GM12878 (cell line): ENCODE measurements at regions of chr9 and their contacts with region 1.

Region 1: GRCh38 chr9:2053883-2054845 is 39.0 kb downstream of the SMARCA2 start:
- DNase-seq: peak; percentile 95
- ATAC-seq: peak; percentile 95
- H3K4me3 ChIP-seq: peak overlapping the region; percentile 31; the same call in 1 of the 2 replicates
- H3K27ac ChIP-seq: peak overlapping the region; percentile 78
- H3K4me1 ChIP-seq: peaks cover 33% of the 10 kb centered on the region
- H3K27me3 ChIP-seq: no peaks in the 10 kb centered on the region
- CTCF ChIP-seq: no peak
- EP300 ChIP-seq: peak; percentile 87 to 88
- POLR2A ChIP-seq: 0 out of 2 replicates have a peak, but pooled peaks have one; percentile 28
- RAD21 ChIP-seq: 0 out of 2 replicates have a peak, but pooled peaks have one; percentile 6

Region 2: DNA sequence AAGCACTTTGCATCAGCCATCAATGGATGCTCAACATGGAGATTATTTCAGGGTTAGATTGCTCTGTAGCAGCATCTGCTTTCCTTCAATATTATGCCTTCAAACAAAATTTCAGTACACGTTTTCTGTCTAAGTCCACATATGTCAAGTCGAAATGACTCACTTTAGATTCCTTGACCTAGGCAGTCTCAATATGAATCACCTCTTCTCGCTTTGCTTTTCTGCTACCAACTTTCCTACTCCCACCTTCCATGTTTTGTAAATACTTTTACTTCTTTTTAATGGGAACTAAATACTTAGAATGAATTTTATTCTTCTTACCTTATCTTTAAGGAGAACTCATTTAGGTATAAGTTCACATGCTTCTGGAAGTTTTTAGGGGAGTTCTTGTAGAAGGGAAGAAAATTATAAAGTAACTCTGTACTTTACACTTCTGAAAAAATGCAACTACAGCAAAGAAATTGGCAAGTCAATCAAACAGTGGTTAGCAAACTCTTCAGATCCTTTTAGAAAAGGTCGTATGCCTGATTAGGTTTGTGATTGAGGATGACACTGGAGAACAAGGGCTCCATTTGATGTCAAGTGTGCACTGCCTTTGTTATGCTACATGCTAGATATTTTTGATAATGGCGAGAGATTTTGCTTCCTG is 517.5 kb before region 1 on chr9:
- CTCF ChIA-PET with region 1: no interaction called
- POLR2A ChIA-PET with region 1: no interaction called
- RAD21 ChIA-PET with region 1: no interaction called
- SMC1A ChIA-PET with region 1: no interaction called
- in situ Hi-C with region 1: no loop called
- intact Hi-C with region 1: no loop called
- DNase-seq: peak; percentile 38
- ATAC-seq: peak; percentile 86
- H3K4me3 ChIP-seq: no peak overlapping the region
- H3K27ac ChIP-seq: no peak overlapping the region
- H3K4me1 ChIP-seq: peaks cover 6% of the 10 kb centered on the region; the same call in 1 of the 2 replicates
- H3K27me3 ChIP-seq: no peaks in the 10 kb centered on the region
- CTCF ChIP-seq: no peak
- EP300 ChIP-seq: peak; percentile 64 to 85; a peak in 3 of 4 replicates
- POLR2A ChIP-seq: no peak
- RAD21 ChIP-seq: no peak

Region 3: DNA sequence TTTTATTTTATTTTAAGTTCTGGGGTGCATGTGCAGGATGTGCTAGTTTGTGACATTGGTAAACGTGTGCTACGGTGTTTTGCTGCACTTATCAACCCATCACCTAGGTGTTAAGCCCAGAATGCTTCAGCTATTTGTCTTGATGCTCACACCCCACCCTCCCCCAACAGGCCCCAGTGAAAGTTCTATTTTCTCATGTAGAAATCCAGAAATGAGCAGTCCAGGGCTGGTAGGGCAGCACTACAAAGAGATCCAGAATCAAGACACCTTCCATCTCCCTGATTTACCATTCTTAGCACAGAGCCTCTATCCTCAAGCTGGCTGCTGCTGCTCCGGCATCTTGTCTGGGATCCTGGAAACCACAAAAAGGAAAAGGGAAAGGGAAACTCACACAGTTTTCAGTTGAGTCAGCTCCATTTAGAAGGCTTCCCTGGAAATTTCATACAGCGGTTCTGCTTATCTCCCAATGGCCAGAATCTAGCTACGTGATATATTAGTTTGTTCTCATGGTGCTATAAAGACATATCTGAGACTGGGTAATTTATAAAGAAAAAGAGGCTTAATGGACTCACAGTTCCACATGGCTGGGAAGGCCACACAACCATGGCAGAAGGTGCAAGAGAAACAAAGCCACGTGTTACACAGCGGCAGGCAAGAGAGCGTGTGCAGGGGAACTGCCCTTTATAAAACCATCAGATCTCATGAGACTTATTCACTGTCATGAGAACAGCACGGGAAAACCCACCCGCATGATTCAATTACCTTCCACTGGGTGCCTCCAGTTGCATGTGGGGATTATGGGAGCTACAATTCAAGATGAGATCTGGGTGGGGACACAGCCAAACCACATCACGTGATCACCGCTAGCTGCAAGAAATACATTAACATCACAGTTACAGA is 124.2 kb before region 1 on chr9:
- CTCF ChIA-PET with region 1: no interaction called
- POLR2A ChIA-PET with region 1: no interaction called
- RAD21 ChIA-PET with region 1: interaction called, 5 read pairs
- SMC1A ChIA-PET with region 1: interaction called, 19 read pairs
- in situ Hi-C with region 1: no loop called
- intact Hi-C with region 1: no loop called
- DNase-seq: peak; percentile 84
- ATAC-seq: peak; percentile 87
- H3K4me3 ChIP-seq: peak overlapping the region; percentile 58
- H3K27ac ChIP-seq: peak overlapping the region; percentile 88
- H3K4me1 ChIP-seq: peaks cover 24% of the 10 kb centered on the region
- H3K27me3 ChIP-seq: no peaks in the 10 kb centered on the region
- CTCF ChIP-seq: 0 out of 6 replicates have a peak, but pooled peaks of 1 of the 3 experiments have one; percentile 6
- EP300 ChIP-seq: peak; percentile 39 to 73; a peak in 1 of 4 replicates
- POLR2A ChIP-seq: no peak
- RAD21 ChIP-seq: peak; percentile 44

Region 4: GRCh38 chr9:2014696-2015580 is 39.2 kb before region 1 on chr9 and contains the start of gene SMARCA2:
- CTCF ChIA-PET with region 1: interaction called, 3 read pairs
- POLR2A ChIA-PET with region 1: no interaction called
- RAD21 ChIA-PET with region 1: interaction called, 9 read pairs
- SMC1A ChIA-PET with region 1: interaction called, 26 read pairs
- in situ Hi-C with region 1: no loop called
- intact Hi-C with region 1: loop called (anchors 2 kb)
- DNase-seq: peak; percentile 86
- ATAC-seq: peak; percentile 81
- H3K4me3 ChIP-seq: peak within 1 kb of the TSS; percentile 95
- H3K27ac ChIP-seq: peak within 1 kb of the TSS; percentile 91
- H3K4me1 ChIP-seq: peaks cover 17% of the 10 kb centered on the region; the same call in 1 of the 2 replicates
- H3K27me3 ChIP-seq: no peaks in the 10 kb centered on the region
- CTCF ChIP-seq: no peak
- EP300 ChIP-seq: 0 out of 4 replicates have a peak, but pooled peaks of 1 of the 2 experiments have one; percentile 16
- POLR2A ChIP-seq: peak; percentile 98
- RAD21 ChIP-seq: no peak
- polyA plus RNA-seq, gene SMARCA2: 100 to 130 TPM

Region 5: DNA sequence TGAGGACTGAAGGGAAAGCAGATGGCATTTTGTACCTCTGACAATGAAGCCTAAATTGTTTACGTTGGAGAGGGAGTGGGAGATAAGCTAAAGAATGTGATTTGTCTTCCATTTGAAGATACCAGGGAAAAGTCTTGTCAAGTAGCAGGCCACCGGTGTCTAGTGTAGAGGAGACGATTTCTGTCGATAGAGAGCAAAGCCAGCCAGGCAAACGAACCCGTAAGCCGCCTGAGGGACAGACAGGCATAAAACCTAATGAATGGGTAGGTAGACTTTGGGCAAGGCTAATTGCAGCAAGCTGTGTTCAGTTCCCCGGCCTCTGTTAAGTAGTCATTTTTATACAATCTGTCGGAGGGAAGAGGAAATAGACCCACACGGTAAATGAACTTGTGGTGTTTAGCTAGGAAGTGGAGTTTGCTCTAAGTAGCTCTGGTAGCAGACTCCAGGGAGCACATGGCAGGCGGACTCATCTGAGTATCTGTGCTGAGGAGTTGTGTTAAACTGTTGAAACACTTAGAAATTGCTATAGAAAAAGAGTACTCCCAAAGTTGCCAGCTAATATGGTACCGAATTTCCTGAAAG is 10.2 kb before region 1 on chr9:
- CTCF ChIA-PET with region 1: interaction called, 5 read pairs
- POLR2A ChIA-PET with region 1: interaction called, 9 read pairs
- RAD21 ChIA-PET with region 1: interaction called, 14 read pairs
- SMC1A ChIA-PET with region 1: interaction called, 45 read pairs
- in situ Hi-C with region 1: no loop called
- intact Hi-C with region 1: no loop called
- DNase-seq: no peak
- ATAC-seq: peak; percentile 59
- H3K4me3 ChIP-seq: 0 out of 2 replicates have a peak overlapping the region, but pooled peaks have one; percentile 16
- H3K27ac ChIP-seq: peak overlapping the region; percentile 75
- H3K4me1 ChIP-seq: peaks cover 29% of the 10 kb centered on the region
- H3K27me3 ChIP-seq: no peaks in the 10 kb centered on the region
- CTCF ChIP-seq: no peak
- EP300 ChIP-seq: no peak
- POLR2A ChIP-seq: no peak; the same call in 1 of the 2 replicates
- RAD21 ChIP-seq: no peak

Region 6: DNA sequence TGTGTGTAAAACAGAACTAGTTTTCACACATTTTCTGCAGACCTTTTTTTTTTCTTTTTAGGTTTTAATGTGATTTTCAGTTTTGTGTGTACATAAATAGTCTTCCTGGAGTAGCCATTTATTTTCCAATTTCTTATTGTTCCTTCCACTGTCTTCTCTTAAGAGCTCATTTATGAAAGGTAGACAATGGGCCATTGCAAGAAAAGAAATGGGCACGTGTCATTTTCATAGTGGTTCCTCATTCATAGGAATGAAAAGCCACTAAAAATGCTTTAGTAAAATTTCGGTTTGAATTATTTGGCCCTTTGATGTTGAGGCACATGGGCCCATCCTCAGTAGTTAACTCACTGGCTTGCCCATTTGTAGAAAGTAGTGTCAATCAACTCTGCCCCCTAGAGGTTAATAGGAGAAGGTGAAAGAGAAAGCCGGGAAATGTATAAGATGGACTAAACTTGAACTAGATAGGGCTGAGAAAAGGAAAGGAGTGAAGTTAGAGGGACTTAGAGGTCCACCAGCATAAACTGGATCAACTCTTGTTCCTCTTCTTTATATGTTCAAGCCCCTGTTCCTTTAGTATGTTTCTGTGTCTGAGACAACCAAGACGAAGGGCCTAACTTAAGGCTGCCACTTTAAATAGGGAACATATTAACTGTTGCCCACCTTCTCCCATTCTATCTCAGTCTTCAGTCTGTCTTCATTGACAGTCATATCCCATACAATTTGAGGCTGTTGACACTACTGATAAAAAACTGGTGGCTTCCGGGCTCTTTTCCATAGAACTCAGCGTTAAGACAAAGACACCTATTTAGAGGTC is 33.5 kb after region 1 on chr9:
- CTCF ChIA-PET with region 1: interaction called, 11 read pairs
- POLR2A ChIA-PET with region 1: interaction called, 5 read pairs
- RAD21 ChIA-PET with region 1: interaction called, 20 read pairs
- SMC1A ChIA-PET with region 1: interaction called, 35 read pairs
- in situ Hi-C with region 1: no loop called
- intact Hi-C with region 1: loop called (anchors 2 kb)
- DNase-seq: peak; percentile 45
- ATAC-seq: peak; percentile 91
- H3K4me3 ChIP-seq: no peak overlapping the region
- H3K27ac ChIP-seq: peak overlapping the region; percentile 38
- H3K4me1 ChIP-seq: peaks cover 4% of the 10 kb centered on the region; the same call in 1 of the 2 replicates
- H3K27me3 ChIP-seq: no peaks in the 10 kb centered on the region
- CTCF ChIP-seq: peak; percentile 60 to 68 (median 65)
- EP300 ChIP-seq: no peak
- POLR2A ChIP-seq: no peak
- RAD21 ChIP-seq: peak; percentile 68